ENCODE measurements at regions of chr11 and their contacts with region 1.

Region 1: DNA sequence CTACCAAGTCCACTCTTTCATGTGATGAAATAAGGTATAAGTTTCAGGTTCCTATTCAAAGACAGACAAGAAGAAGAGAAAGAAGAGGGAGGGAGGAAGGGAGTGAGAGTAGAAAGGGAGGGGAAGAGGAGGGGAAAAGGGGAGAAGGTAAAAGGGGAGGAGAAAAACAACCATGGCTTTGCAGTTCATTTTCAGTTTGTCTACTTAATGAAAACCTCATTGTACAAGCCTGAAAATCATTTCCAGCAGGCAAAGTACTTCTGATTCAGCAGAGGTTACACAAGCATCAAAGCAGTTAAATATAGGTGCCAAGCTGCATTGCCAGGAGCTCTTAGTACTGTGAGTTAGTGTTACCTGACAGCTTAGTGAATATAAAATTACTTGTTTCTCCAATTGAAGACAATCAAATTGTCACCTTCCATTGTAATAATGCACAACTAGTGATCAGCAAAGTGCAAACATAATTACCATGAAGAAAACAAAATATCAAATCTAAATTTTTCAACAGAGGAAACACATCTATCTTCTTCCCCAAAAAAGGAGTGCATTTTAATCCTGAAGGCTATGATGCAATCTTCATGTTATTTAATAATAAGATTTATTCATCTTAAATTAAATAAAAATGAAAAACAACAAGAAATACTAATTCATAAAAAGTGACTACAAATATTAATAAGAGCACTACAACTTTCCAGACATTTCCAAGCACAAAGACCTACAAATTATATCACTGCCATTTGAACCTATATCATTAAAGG is 8.2 kb downstream of the SOX6 start:
- DNase-seq: peak; percentile 63 to 77
- ATAC-seq: peak; percentile 86 to 95
- H3K4me3 ChIP-seq: peak overlapping the region in 2 of 4 donors; percentile 5 to 21
- H3K27ac ChIP-seq: peak overlapping the region; percentile 82 to 89 (median 85)
- H3K4me1 ChIP-seq: peaks cover 33 to 44% of the 10 kb centered on the region in 2 donors
- H3K27me3 ChIP-seq: no peaks in the 10 kb centered on the region
- CTCF ChIP-seq: no peak
- POLR2A ChIP-seq: no peak

Region 2: GRCh38 chr11:16297332-16297731 is 50.8 kb before region 1 on chr11:
- in situ Hi-C with region 1: no loop called
- intact Hi-C with region 1: loop called (anchors 5 kb)
- DNase-seq: peak; percentile 3 to 26
- ATAC-seq: peak; percentile 38 to 53
- H3K4me3 ChIP-seq: no peak overlapping the region
- H3K27ac ChIP-seq: peak overlapping the region; percentile 8 to 87 (median 61)
- H3K4me1 ChIP-seq: peaks cover 54 to 67% of the 10 kb centered on the region in 2 donors
- H3K27me3 ChIP-seq: no peaks in the 10 kb centered on the region
- CTCF ChIP-seq: no peak
- POLR2A ChIP-seq: no peak